ENCODE measurements at regions of chr11 and their contacts with region 1.

Region 1: GRCh38 chr11:118380571-118380970 is 20.8 kb upstream of the ATP5MG start:
- DNase-seq: no peak
- ATAC-seq: no peak
- H3K4me3 ChIP-seq: no peak overlapping the region
- H3K27ac ChIP-seq: no peak overlapping the region
- H3K4me1 ChIP-seq: no peaks in the 10 kb centered on the region
- H3K27me3 ChIP-seq: no peaks in the 10 kb centered on the region

Region 2: DNA sequence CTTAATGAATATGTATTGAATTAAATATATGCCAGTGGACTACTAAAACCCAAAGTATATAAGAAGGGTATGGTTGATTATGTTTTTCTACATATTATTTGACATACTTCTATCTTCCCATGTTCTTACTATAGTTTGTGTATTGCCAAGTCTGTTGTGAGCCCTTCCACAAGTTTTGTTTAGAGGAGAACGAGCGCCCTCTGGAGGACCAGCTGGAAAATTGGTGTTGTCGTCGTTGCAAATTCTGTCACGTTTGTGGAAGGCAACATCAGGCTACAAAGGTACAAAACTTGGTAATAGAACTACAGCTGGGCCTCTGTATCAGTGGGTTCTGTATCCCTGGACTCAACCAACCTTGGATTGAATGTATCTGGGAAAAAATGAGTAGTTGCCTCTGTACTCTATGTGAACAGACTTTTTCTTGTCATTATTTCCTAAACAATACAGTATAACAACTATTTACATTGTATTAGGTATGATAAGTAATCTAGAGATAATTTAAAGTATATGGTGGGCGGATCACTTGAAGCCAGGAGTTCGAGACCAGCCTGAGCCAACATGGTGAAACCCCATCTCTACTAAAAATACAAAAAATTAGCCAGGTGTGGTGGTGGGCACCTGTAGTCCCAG is 108.0 kb after region 1 on chr11:
- intact Hi-C with region 1: loop called in 1 of 4 experiments (anchors 10 kb)
- DNase-seq: peak; percentile 58 to 77 (median 65)
- ATAC-seq: peak; percentile 59 to 64
- H3K4me3 ChIP-seq: no peak overlapping the region
- H3K27ac ChIP-seq: no peak overlapping the region
- H3K4me1 ChIP-seq: no peaks in the 10 kb centered on the region
- H3K27me3 ChIP-seq: no peaks in the 10 kb centered on the region

Measured in right cardiac atrium (tissue), 5 donors.